ENCODE measurements at regions of chr2 and their contacts with region 1.

Region 1: GRCh38 chr2:36663851-36664695 is 32.4 kb upstream of the VIT start:
- DNase-seq: peak; percentile 66
- H3K4me3 ChIP-seq: no peak overlapping the region
- H3K27ac ChIP-seq: no peak overlapping the region
- H3K4me1 ChIP-seq: no peaks in the 10 kb centered on the region; a peak in 1 of 4 replicates
- H3K27me3 ChIP-seq: no peaks in the 10 kb centered on the region
- CTCF ChIP-seq: peak; percentile 97
- EP300 ChIP-seq: no peak; a peak in 1 of 4 replicates
- RAD21 ChIP-seq: peak; percentile 94

Region 2: GRCh38 chr2:36461039-36461681 is 202.9 kb before region 1 on chr2:
- CTCF ChIA-PET with region 1: interaction called, 10 read pairs
- POLR2A ChIA-PET with region 1: no interaction called
- DNase-seq: no peak
- H3K4me3 ChIP-seq: no peak overlapping the region
- H3K27ac ChIP-seq: peak overlapping the region; percentile 66 to 95; a peak in 3 of 4 replicates
- H3K4me1 ChIP-seq: peaks cover 7 to 64% of the 10 kb centered on the region in 2 experiments; a peak in 3 of 4 replicates
- H3K27me3 ChIP-seq: no peaks in the 10 kb centered on the region
- CTCF ChIP-seq: no peak
- EP300 ChIP-seq: peak in 1 of 2 experiments; percentile 85; a peak in 1 of 4 replicates
- RAD21 ChIP-seq: no peak

Region 3: DNA sequence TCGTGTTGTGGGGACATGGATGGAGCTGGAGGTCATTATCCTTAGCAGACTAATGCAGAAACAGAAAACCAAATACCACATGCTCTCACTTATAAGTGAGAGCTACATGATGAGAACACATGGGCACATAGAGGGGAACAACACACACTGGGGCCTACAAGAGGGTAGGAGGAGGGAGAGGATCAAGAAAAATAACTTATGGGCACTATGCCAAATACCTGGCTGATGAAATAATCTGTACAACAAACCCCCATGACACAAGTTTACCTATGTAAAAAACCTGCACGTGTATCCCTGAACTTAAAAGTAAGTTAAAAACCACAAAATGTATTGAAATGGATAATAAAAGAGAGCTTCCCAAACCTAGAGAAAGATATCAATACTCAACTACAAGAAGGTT is 25.2 kb before region 1 on chr2:
- CTCF ChIA-PET with region 1: interaction called, 13 read pairs
- POLR2A ChIA-PET with region 1: no interaction called
- DNase-seq: no peak
- H3K4me3 ChIP-seq: no peak overlapping the region
- H3K27ac ChIP-seq: no peak overlapping the region
- H3K4me1 ChIP-seq: peaks cover 4 to 10% of the 10 kb centered on the region in 2 experiments; a peak in 2 of 4 replicates
- H3K27me3 ChIP-seq: no peaks in the 10 kb centered on the region
- CTCF ChIP-seq: no peak
- EP300 ChIP-seq: no peak
- RAD21 ChIP-seq: no peak

Region 4: DNA sequence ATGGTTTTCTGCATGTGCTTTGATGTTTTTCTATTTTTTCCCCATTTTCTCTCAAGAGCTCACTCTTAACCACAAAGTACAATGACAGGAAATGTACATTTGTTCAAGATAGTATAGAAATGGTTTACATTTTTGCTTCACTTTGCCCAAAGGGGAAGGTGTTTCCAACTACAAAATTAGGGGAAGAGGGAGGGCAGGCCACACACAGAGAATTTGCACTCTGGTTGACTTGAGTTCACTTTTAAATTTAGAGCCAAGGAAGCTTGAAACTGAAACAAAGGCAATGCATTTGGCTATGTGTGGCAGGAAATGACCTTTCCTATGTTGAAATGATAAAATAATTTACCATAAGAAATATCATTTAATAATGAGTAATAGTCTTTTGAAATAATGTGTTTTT is 13.3 kb after region 1 on chr2:
- CTCF ChIA-PET with region 1: interaction called, 24 read pairs
- POLR2A ChIA-PET with region 1: no interaction called
- DNase-seq: no peak
- H3K4me3 ChIP-seq: no peak overlapping the region
- H3K27ac ChIP-seq: no peak overlapping the region
- H3K4me1 ChIP-seq: peaks cover 0 to 6% of the 10 kb centered on the region in 2 experiments; a peak in 1 of 4 replicates
- H3K27me3 ChIP-seq: no peaks in the 10 kb centered on the region
- CTCF ChIP-seq: no peak
- EP300 ChIP-seq: no peak
- RAD21 ChIP-seq: no peak

Region 5: GRCh38 chr2:36785179-36785795 is 121.2 kb after region 1 on chr2:
- CTCF ChIA-PET with region 1: interaction called, 15 read pairs
- POLR2A ChIA-PET with region 1: no interaction called
- DNase-seq: peak; percentile 72
- H3K4me3 ChIP-seq: peak overlapping the region in 1 of 2 experiments; percentile 15; a peak in 1 of 4 replicates
- H3K27ac ChIP-seq: no peak overlapping the region
- H3K4me1 ChIP-seq: no peaks in the 10 kb centered on the region
- H3K27me3 ChIP-seq: peaks cover 10% of the 10 kb centered on the region; the same call in 1 of the 2 replicates
- CTCF ChIP-seq: peak; percentile 99
- EP300 ChIP-seq: no peak
- RAD21 ChIP-seq: peak; percentile 84

Measured in SK-N-SH (cell line).